ENCODE measurements at regions of chr22 and their contacts with region 1.

Region 1: GRCh38 chr22:30183861-30184278 is 62.7 kb downstream of the LIF start:
- DNase-seq: no peak
- H3K4me3 ChIP-seq: no peak overlapping the region
- H3K27ac ChIP-seq: no peak overlapping the region
- H3K4me1 ChIP-seq: no peaks in the 10 kb centered on the region; a peak in 1 of 7 replicates
- H3K27me3 ChIP-seq: no peaks in the 10 kb centered on the region; a peak in 1 of 7 replicates
- CTCF ChIP-seq: no peak
- EP300 ChIP-seq: no peak
- POLR2A ChIP-seq: no peak
- RAD21 ChIP-seq: no peak

Region 2: DNA sequence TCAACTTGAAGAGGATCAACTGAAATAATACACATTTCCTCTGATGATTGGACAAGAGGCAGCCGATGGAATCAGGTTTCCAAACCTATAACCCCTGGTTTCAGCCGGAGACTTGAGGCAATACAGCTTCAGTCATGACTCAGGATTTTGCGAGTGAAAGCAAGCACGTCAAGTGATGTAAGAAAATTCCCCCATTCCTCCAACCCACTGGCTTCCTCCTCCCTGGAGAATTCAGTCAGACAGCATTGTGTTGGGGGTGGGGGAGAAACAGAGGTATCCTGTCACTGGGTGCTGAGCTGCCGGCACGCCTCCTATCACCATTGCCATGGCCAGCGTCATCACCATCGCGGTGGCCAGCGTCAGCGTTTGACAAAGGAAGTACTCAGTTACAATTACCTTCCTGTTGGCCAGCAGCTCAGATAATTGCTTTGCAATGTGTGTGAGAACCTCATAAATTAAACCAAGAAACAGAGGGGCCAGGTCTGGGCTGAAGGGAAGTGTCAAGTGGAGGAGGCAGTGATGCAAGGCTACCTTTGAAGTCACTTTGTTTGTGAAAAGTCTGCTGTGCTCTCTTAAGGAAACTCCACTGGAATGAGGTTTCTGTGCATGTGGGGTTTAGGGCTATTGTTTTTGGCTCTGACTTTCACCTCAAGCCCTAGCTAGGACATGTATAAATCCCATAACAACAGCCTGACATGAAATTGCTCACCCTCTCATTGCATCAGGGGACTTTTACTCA is 12.4 kb after region 1 on chr22:
- CTCF ChIA-PET with region 1: no interaction called
- POLR2A ChIA-PET with region 1: interaction called, 12 read pairs
- DNase-seq: peak; percentile 58 to 70
- H3K4me3 ChIP-seq: peak overlapping the region in 1 of 4 experiments; percentile 12; a peak in 1 of 8 replicates
- H3K27ac ChIP-seq: peak overlapping the region; percentile 45; the same call in 1 of the 2 replicates
- H3K4me1 ChIP-seq: peaks cover 6 to 18% (median 11%) of the 10 kb centered on the region in 4 experiments; a peak in 6 of 7 replicates
- H3K27me3 ChIP-seq: no peaks in the 10 kb centered on the region; a peak in 1 of 7 replicates
- CTCF ChIP-seq: no peak
- EP300 ChIP-seq: no peak
- POLR2A ChIP-seq: 0 out of 3 replicates have a peak, but pooled peaks of 1 of the 2 experiments have one; percentile 29
- RAD21 ChIP-seq: no peak

Measured in H1 (cell line).